ENCODE measurements at regions of chr15 and their contacts with region 1.

Region 1: DNA sequence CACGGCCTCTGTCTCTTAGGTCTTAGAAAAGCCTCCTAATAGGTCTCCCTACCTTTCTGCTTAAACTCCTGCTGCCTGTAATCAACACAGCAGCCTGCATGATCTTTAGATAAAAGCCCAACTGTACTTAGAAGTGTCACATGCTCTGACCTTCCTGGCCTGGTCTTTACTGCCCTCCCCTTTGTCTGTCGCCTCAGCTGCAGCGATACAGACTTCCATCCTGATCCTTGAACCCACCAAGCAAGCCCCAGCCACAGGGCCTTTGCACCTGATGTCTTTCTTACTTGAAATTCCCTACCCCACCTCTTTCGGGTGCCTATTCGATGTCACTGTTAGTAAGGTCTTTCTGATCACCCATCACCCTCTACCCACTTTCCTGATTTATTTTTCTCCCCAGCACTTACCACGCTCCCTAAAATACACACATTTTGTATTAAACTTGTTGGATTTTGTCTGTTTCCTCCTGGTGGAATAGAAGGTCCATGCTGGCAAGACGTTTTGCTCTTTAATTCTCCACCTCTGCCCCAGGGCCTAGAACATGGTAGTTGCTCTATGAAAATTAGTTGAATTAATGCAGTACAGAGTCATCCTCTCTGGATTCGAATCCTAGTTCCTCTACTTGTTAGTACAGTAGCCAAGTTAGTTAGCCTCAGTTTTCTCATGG is 51.1 kb downstream of the AQP9 start:
- DNase-seq: no peak
- ATAC-seq: no peak
- H3K4me3 ChIP-seq: no peak overlapping the region
- H3K27ac ChIP-seq: no peak overlapping the region
- H3K4me1 ChIP-seq: no peaks in the 10 kb centered on the region
- H3K27me3 ChIP-seq: peaks cover 0 to 9% (median 0%) of the 10 kb centered on the region in 9 donors
- CTCF ChIP-seq: no peak
- POLR2A ChIP-seq: no peak

Region 2: DNA sequence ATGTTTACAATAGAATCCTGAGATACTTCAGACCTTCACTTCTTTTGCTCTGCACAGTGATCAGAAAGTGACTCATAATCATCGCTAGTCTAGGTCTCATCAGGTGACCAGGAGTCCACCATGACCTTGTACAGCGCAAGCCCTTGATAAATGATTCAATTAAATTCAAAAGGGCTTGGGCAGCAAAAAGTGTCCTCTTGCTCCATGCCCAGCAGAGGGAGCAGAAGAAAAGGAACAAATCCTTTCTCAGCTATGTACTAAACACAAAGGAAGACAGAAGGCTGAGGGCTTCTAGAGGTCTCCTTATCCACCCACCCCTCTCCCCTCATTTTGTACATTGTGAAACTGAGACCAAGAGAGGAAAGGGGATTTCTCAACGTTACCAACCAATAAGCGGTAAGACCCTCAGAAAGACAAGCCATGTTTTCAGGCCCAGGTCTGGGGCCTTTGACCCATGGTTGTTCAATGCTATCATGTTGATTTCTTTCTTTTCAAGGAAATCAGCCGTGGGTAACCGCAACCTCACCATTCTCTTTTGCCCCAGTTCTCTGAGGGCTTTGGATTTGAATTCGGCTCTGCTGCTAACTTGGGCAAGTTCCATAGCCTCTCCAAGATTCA is 23.7 kb after region 1 on chr15:
- intact Hi-C with region 1: loop called in 1 of 10 experiments (anchors 2 kb)
- DNase-seq: no peak
- ATAC-seq: peak; percentile 35 to 75 (median 62)
- H3K4me3 ChIP-seq: no peak overlapping the region
- H3K27ac ChIP-seq: no peak overlapping the region
- H3K4me1 ChIP-seq: peaks cover 0 to 20% (median 6%) of the 10 kb centered on the region in 12 donors
- H3K27me3 ChIP-seq: no peaks in the 10 kb centered on the region
- CTCF ChIP-seq: peak; percentile 28 to 62 (median 43)
- POLR2A ChIP-seq: no peak